BJ (cell line): ENCODE measurements at regions of chr11 and their contacts with region 1.

Region 1: GRCh38 chr11:1572197-1573076 is at the start of gene DUSP8:
- DNase-seq: no peak
- H3K4me3 ChIP-seq: peak within 1 kb of the TSS; percentile 69
- H3K27me3 ChIP-seq: peaks cover 2% of the 10 kb centered on the region; the same call in 1 of the 2 replicates
- CTCF ChIP-seq: no peak
- polyA plus RNA-seq, gene DUSP8: 1.9 and 3.4 TPM in 2 replicates

Region 2: GRCh38 chr11:1202776-1203504 is 369.5 kb before region 1 on chr11:
- CTCF ChIA-PET with region 1: interaction called, 18 read pairs
- POLR2A ChIA-PET with region 1: no interaction called
- DNase-seq: no peak
- H3K4me3 ChIP-seq: no peak overlapping the region
- H3K27me3 ChIP-seq: no peaks in the 10 kb centered on the region
- CTCF ChIP-seq: peak; percentile 95

Region 3: DNA sequence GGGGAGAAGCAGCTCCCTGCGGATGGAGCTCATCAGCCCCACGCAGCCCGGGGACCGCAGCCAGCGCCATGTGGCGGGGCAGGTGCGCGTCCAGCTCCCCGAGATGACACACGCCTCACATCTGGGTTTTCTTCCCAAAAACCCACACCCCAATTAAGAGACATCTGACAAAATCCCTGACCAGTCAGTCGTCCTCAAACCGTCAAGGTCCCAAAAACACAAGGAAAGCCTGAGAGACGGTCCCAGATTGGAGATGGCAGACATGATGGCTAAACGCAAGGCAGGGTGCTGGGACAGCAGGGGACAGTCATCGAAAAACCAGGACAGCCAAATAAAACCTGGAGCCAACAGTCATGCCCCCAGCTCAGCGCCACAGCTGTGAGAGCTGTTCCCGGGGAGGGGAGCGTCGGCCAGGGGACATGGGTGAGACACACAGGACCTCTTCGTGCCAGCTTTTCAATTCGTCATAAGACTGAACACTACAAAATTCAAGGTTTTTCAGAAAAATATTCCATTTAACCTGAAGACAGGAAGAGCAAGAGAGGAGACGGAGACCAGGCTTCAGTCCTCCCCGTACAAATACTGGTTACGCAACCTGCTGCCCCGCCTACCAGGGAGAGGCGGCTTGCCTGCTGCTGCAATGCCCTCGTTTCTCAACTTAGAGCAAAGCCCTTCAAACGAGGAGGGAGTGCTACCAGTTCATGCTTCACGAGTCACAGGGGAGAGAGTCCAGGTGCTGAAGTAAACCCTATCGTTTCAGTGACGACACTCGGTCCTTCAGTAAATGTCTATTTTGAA is 273.5 kb before region 1 on chr11:
- CTCF ChIA-PET with region 1: no interaction called
- POLR2A ChIA-PET with region 1: no interaction called
- DNase-seq: peak; percentile 11
- H3K4me3 ChIP-seq: no peak overlapping the region
- H3K27me3 ChIP-seq: no peaks in the 10 kb centered on the region
- CTCF ChIP-seq: no peak

Region 4: DNA sequence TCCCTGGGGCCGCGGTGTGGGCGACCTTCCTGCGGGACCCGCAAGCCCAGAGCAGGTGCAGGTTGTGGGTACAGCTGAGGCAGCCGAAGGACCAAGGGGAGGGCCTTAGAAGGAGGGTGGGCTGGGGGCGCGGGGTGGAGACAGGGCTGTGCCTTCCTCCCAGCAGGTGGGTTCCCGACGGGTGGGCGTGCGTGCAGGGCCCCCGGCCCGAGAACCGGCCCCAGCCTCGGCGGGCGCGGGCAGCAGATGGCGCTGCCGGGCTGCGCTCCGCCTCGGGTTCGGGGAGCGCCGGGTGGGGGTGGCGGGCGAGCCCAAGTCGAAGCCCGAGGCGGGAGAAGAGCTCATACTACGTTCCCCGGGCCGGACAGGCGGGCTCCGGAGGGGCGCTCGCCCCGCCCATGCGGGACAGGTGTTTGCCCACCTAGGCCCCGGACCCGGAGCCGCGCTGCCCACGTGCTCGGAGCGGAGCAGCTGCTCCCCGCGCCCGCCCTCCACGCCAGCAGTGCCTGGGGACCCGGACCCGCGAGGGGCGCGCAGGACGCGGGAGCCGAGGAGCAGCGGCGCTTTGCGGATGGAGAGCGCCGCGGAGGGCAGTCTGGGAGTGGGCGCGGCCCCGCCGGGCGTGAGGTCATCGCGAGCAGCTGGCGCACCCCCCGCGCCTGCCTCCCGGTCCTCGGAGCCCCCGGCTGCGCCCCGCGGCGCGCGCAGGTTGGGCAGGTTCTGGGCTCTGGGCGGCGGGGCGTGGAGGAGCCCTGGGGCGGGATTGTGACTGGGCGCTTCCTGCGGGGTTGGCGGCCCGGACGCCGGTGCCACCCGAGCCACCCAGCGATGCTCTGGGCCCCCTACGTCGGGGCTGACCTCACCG is 25.7 kb before region 1 on chr11:
- CTCF ChIA-PET with region 1: interaction called, 301 read pairs
- POLR2A ChIA-PET with region 1: interaction called, 4 read pairs
- DNase-seq: no peak
- H3K4me3 ChIP-seq: peak overlapping the region; percentile 21; the same call in 1 of the 2 replicates
- H3K27me3 ChIP-seq: peaks cover 30% of the 10 kb centered on the region
- CTCF ChIP-seq: peak; percentile 49

Region 5: DNA sequence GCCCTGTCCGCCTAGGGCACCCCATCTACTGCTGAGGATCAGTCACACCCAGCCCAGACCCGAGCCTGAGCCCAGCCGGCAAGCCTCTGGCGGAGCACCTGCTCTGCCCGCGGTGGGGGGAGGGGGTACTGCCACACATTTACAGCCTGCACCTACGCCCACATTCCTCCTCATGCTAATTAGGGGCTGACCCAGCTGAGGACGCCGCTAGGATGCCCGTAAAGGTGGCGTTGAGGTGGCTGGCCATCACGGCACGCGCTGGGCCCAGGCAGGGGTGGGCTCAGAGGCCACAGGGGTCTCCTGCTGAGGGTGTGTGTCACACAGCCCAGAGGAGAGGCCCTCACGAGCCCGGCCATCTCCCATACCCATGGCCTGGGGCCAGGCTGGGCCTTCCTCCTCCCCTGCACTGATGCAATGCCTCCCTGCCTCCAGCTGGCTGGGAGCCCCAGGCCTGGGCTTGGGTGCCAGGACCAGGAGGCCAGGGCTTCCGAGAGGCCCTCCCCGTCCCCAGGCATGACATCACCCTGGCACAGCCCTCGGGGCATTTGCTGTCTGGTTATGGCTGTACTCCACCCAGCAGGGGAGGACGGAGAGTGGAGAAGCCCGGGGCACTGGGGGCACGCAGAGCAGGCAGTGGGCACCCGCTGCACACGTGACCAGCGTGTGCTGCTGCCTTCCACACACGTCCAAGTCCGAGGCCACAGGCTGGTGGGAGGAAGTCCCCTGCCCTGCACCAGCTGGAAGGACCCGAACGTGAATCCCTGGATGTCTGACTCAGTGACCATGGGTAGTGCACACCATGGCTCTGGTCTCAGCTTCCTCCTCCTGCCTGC is 13.1 kb before region 1 on chr11:
- CTCF ChIA-PET with region 1: interaction called, 62 read pairs
- POLR2A ChIA-PET with region 1: no interaction called
- DNase-seq: peak; percentile 39
- H3K4me3 ChIP-seq: no peak overlapping the region
- H3K27me3 ChIP-seq: no peaks in the 10 kb centered on the region
- CTCF ChIP-seq: no peak

Region 6: DNA sequence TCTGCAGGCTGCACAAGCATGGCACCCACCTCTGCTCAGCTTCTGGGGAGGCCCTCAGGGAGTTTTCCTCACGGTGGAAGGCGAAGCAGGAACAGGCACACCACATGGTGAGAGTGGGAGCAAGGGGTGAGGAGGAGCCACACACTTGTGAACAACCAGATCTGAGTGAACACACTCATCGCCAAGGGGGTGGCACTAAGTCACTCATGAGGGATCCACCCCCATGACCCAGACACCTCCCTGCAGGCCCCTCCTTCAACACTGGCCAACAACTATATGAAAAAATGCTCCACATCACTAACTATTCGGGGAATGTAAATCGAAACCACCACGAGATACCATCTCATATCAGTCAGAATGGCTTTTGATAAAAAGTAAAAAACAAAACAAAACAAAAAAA is 26.4 kb after region 1 on chr11:
- CTCF ChIA-PET with region 1: interaction called, 31 read pairs
- POLR2A ChIA-PET with region 1: no interaction called
- DNase-seq: no peak
- H3K4me3 ChIP-seq: no peak overlapping the region
- H3K27me3 ChIP-seq: peaks cover 16% of the 10 kb centered on the region
- CTCF ChIP-seq: no peak